RWPE1 (cell line): ENCODE measurements at regions of chr22 and their contacts with region 1.

Region 1: DNA sequence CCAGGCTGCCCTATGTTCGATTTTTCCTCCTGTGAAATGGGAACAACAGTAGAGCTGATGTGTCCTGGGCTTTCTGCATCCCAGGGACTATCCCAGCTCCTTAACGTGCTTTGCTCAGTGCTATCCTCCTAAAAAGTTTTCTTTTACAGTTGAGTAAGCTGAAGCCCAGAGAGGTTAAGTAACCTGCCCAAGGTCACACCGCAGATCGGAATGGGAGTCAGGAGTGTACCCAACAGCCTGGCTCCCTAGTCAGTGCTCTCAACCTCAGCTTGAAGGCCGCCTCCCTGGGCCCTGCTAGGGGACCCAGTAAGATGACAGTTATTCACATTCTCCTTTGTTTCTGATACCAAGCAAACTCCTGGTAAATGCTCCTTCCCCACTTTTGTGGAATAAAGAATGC is 45.9 kb downstream of the PARVB start:
- DNase-seq: no peak
- H3K27ac ChIP-seq: no peak overlapping the region
- CTCF ChIP-seq: no peak

Region 2: GRCh38 chr22:44080936-44081861 is 11.2 kb after region 1 on chr22:
- CTCF ChIA-PET with region 1: interaction called, 12 read pairs
- POLR2A ChIA-PET with region 1: no interaction called
- DNase-seq: peak; percentile 59
- H3K27ac ChIP-seq: no peak overlapping the region
- CTCF ChIP-seq: peak; percentile 92